Panc1 (cell line): ENCODE measurements at regions of chr7 and their contacts with region 1.

Region 1: DNA sequence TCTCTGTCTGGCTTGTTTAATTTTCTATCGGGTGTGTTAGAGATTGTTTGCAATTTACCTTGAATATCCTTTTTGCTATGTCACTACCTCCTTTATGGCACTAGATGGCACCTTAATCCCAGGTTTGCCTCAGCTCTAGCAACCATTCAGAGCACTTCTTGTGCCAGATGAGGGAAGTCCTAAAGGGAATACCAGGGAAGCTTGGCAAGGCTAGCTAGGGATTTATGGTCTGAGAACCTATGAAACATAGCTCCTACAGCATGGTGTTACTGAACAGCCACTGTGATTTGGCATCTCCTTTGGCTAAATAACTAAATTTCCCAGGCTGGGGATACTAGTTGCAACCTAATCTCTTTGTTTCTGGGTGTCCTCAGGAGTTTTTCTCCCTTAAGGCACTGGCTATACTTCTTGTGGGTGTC is 69.0 kb upstream of the VOPP1 start:
- DNase-seq: peak; percentile 72
- ATAC-seq: peak; percentile 98
- H3K4me3 ChIP-seq: no peak overlapping the region
- H3K27ac ChIP-seq: no peak overlapping the region
- H3K4me1 ChIP-seq: no peaks in the 10 kb centered on the region
- H3K27me3 ChIP-seq: no peaks in the 10 kb centered on the region; the same call in 1 of the 2 replicates
- CTCF ChIP-seq: peak; percentile 85

Region 2: DNA sequence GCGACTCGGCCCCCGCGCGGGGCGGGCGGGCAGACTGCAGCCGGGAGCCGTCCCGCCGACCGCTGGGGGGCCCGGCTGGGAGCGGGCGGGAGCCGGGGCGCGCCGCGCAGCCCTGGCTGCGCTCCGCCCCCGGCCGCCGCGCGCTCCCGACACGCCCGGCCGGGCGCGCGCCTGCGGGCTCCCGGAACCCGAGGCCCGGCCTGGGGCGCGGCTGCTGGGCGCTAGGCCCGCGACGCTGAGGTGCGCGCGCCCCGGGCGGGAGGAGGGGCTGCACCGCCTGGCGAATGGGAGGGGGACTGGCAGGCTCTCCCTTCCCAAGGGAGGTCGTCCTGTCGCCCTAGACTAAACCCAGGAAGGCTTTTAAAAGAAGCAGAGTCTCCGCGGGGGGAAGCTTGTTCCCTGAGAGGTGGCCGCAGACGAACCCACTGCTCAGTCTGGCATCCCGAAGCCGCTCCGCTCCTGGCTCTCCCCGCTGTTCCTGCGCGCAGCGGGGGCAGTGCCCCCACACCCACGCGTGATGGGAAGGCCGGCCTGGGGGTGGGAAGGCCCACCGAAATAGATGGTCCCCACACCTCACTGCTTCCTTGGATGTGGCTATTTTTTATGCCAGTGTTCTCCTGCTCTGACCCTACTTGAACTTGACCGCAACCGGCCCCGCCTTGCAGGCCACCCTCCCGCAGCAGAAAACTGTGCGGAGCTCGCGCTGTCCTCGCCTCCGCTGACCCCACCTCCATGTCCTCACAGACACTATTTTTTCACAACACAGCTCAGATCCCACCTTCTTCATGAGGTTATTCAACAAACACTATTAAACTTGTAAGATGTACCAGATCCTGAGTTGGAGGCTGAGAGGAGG is 68.7 kb before region 1 on chr7 and contains the start of gene VOPP1:
- CTCF ChIA-PET with region 1: no interaction called
- POLR2A ChIA-PET with region 1: no interaction called
- in situ Hi-C with region 1: loop called (anchors 5 kb)
- intact Hi-C with region 1: no loop called
- DNase-seq: no peak
- ATAC-seq: peak; percentile 90
- H3K4me3 ChIP-seq: peak within 1 kb of the TSS; percentile 80 to 85
- H3K27ac ChIP-seq: peak within 1 kb of the TSS; percentile 94
- H3K4me1 ChIP-seq: peaks cover 38% of the 10 kb centered on the region
- H3K27me3 ChIP-seq: no peaks in the 10 kb centered on the region
- CTCF ChIP-seq: peak; percentile 52; the same call in 1 of the 2 replicates
- total RNA-seq, gene VOPP1: 131 TPM

Region 3: GRCh38 chr7:55587687-55588378 is 53.4 kb before region 1 on chr7:
- CTCF ChIA-PET with region 1: no interaction called
- POLR2A ChIA-PET with region 1: no interaction called
- in situ Hi-C with region 1: no loop called
- intact Hi-C with region 1: no loop called
- DNase-seq: no peak
- ATAC-seq: no peak
- H3K4me3 ChIP-seq: no peak overlapping the region
- H3K27ac ChIP-seq: no peak overlapping the region
- H3K4me1 ChIP-seq: no peaks in the 10 kb centered on the region
- H3K27me3 ChIP-seq: peaks cover 8% of the 10 kb centered on the region; the same call in 1 of the 2 replicates
- CTCF ChIP-seq: no peak

Region 4: DNA sequence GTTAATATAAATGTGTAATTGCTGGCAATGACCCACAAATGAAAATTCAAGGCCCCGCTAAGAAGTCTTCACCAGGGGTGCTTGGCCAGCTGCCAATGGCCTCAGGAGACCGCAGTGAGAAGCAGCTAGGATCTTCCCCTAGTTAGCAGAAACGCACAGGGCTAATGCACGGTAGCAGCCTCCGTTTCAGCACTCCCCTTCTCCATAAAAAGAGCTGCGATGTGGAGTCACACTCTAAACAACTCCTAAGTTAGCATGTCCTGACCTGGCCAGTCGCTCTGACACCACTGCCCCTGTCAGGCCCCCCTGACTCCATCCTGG is 82.3 kb after region 1 on chr7:
- CTCF ChIA-PET with region 1: interaction called, 4 read pairs
- POLR2A ChIA-PET with region 1: no interaction called
- in situ Hi-C with region 1: no loop called
- intact Hi-C with region 1: loop called (anchors 2 kb)
- DNase-seq: no peak
- ATAC-seq: no peak
- H3K4me3 ChIP-seq: no peak overlapping the region
- H3K27ac ChIP-seq: no peak overlapping the region
- H3K4me1 ChIP-seq: no peaks in the 10 kb centered on the region
- H3K27me3 ChIP-seq: no peaks in the 10 kb centered on the region
- CTCF ChIP-seq: no peak

Region 5: DNA sequence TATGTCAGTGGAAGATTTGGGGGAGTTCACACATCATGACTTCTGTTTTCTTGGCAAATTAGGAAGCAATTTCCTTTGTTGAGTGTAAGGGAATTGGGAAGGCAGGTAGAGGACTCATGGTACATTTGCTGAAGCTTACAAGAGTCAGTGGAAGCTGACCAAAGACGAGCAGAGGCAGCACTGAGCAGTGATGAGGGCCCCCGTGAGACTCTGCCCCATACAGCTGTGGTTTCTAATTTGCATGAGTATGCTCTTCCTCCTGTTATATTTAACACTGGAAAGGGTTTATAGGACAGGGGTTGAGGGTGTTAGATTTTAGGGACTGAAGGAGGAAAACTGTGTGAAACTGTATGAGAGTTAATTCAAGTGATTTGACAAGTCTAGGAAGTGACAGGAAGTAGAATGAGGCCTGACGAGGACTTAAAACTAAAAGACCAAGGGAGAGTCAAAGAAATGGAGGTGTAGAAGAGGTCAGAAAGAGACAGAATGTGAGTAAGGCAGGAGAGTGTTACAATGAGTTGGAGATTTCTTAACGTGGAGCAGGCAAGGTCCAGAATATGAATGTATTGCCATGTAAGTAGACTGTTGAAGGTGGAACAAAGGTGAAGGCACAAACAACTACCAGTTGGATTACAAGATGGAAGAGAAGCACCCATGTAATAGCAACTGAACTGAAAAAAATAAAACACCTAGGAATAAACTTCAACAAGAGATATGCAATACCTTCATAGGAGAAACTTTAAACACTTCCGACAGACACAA is 286.9 kb after region 1 on chr7:
- CTCF ChIA-PET with region 1: interaction called, 11 read pairs
- POLR2A ChIA-PET with region 1: no interaction called
- in situ Hi-C with region 1: no loop called
- intact Hi-C with region 1: no loop called
- DNase-seq: no peak
- ATAC-seq: no peak
- H3K4me3 ChIP-seq: no peak overlapping the region
- H3K27ac ChIP-seq: no peak overlapping the region
- H3K4me1 ChIP-seq: no peaks in the 10 kb centered on the region
- H3K27me3 ChIP-seq: no peaks in the 10 kb centered on the region
- CTCF ChIP-seq: no peak

Region 6: DNA sequence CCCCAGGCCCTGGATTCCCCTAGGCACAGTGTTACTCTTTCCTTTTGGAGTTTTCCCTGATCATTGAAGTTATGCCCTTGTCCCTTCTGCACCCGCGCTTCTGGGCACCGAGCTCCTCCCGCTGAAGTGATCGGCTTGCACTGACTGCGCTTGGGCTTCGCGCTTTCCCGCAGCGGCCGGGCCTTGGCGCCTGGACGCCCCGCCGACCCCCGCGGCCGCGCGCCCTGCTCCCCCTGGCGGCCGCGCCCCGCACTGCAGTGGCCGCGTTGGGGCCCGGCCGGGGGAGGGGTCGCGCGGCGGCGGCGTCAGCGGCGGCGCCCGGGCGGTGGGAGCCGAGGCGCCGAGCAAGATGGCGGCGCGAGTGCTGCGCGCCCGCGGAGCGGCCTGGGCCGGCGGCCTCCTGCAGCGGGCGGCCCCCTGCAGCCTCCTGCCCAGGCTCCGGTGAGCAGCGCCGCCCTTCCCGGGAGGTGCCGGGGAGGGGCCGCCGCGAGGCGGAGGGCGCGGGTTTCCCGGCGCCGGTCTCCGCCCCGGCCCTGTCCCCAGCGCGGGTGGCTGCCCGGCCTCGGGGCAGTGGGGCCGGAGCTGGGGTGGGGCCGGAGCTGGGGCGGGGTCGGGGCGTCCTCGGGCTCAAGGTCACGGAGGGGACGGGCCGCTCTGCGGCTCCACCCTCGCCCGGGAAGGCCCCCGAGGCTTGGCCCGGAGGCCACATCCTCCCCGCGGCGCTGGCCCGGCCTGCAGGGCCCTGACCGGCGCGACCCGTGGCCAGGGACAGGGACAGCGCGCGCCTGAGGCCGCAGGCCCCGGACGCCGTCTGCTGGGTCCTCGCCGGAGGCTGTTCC is 323.2 kb after region 1 on chr7 and contains the start of gene NIPSNAP2:
- CTCF ChIA-PET with region 1: interaction called, 11 read pairs
- POLR2A ChIA-PET with region 1: interaction called, 3 read pairs
- in situ Hi-C with region 1: no loop called
- intact Hi-C with region 1: loop called (anchors 5 kb)
- DNase-seq: no peak
- ATAC-seq: peak; percentile 94
- H3K4me3 ChIP-seq: peak within 1 kb of the TSS; percentile 69 to 81
- H3K27ac ChIP-seq: peak within 1 kb of the TSS; percentile 95
- H3K4me1 ChIP-seq: peaks cover 10% of the 10 kb centered on the region
- H3K27me3 ChIP-seq: no peaks in the 10 kb centered on the region
- CTCF ChIP-seq: peak; percentile 99
- total RNA-seq, gene NIPSNAP2: 93.2 TPM

Region 7: GRCh38 chr7:56074371-56074791 is 433.1 kb after region 1 on chr7:
- CTCF ChIA-PET with region 1: interaction called, 3 read pairs
- POLR2A ChIA-PET with region 1: no interaction called
- in situ Hi-C with region 1: no loop called
- intact Hi-C with region 1: loop called (anchors 10 kb)
- DNase-seq: no peak
- ATAC-seq: peak; percentile 96
- H3K4me3 ChIP-seq: no peak overlapping the region
- H3K27ac ChIP-seq: peak overlapping the region; percentile 35
- H3K4me1 ChIP-seq: peaks cover 10% of the 10 kb centered on the region
- H3K27me3 ChIP-seq: no peaks in the 10 kb centered on the region
- CTCF ChIP-seq: peak; percentile 98